SK-N-SH (cell line): ENCODE measurements at regions of chr7 and their contacts with region 1.

Region 1: GRCh38 chr7:139502226-139502625 is 18.8 kb upstream of the KLRG2 start:
- DNase-seq: no peak
- H3K4me3 ChIP-seq: no peak overlapping the region
- H3K27ac ChIP-seq: no peak overlapping the region
- H3K4me1 ChIP-seq: no peaks in the 10 kb centered on the region
- H3K27me3 ChIP-seq: no peaks in the 10 kb centered on the region
- CTCF ChIP-seq: no peak
- EP300 ChIP-seq: no peak
- RAD21 ChIP-seq: no peak

Region 2: DNA sequence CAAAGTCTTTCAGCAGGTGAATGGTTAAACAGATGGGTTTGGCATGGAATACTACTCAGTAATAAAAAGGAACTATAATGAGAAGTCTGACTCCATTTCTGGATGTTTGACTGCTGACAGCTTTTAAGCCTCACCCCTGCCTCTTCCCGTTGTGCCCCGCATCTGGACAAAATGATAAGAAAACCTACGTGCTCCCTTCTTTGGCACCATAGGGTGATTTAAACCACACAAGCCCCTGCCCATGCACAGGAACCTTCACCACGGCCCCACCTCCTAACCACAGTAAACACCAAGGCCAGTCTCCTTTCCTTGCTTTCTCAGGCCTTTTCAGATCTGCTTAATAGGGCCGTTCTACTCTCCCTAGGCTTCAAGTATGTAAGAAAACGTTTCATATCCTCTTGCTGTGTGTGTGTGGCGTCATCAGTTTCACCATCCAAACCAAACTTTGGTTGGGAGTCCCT is 318.3 kb before region 1 on chr7:
- CTCF ChIA-PET with region 1: no interaction called
- POLR2A ChIA-PET with region 1: no interaction called
- DNase-seq: no peak
- H3K4me3 ChIP-seq: no peak overlapping the region
- H3K27ac ChIP-seq: no peak overlapping the region
- H3K4me1 ChIP-seq: peaks cover 0 to 11% of the 10 kb centered on the region in 2 experiments; a peak in 1 of 4 replicates
- H3K27me3 ChIP-seq: no peaks in the 10 kb centered on the region
- CTCF ChIP-seq: no peak
- EP300 ChIP-seq: no peak
- RAD21 ChIP-seq: no peak

Region 3: DNA sequence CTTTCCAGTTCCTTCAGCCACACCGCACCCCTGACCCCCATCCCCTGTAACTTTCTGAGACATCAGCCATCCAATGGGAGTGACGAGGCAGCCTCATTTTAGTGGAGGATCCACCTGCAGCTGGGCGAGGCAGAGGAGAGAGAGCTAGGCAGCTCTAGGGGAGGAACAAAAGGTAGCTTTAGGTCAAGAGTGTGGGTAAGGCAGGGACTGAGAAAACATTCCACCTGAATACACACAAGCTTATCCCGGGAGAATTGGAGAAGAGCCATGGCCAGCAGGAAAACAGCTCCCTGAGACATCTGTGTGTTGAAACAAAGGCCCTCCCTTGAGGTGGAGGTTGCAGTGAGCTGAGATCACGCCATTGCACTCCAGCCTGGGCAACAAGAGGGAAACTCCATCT is 12.1 kb before region 1 on chr7:
- CTCF ChIA-PET with region 1: interaction called, 37 read pairs
- POLR2A ChIA-PET with region 1: no interaction called
- DNase-seq: no peak
- H3K4me3 ChIP-seq: no peak overlapping the region
- H3K27ac ChIP-seq: no peak overlapping the region
- H3K4me1 ChIP-seq: peaks cover under 1 to 4% of the 10 kb centered on the region in 2 experiments; a peak in 1 of 4 replicates
- H3K27me3 ChIP-seq: peaks cover 15% of the 10 kb centered on the region
- CTCF ChIP-seq: no peak
- EP300 ChIP-seq: no peak
- RAD21 ChIP-seq: no peak

Region 4: GRCh38 chr7:139570119-139570518 is 67.9 kb after region 1 on chr7:
- CTCF ChIA-PET with region 1: interaction called, 14 read pairs
- POLR2A ChIA-PET with region 1: no interaction called
- DNase-seq: peak; percentile 66
- H3K4me3 ChIP-seq: no peak overlapping the region
- H3K27ac ChIP-seq: no peak overlapping the region
- H3K4me1 ChIP-seq: no peaks in the 10 kb centered on the region
- H3K27me3 ChIP-seq: no peaks in the 10 kb centered on the region
- CTCF ChIP-seq: no peak
- EP300 ChIP-seq: no peak
- RAD21 ChIP-seq: peak; percentile 46

Region 5: DNA sequence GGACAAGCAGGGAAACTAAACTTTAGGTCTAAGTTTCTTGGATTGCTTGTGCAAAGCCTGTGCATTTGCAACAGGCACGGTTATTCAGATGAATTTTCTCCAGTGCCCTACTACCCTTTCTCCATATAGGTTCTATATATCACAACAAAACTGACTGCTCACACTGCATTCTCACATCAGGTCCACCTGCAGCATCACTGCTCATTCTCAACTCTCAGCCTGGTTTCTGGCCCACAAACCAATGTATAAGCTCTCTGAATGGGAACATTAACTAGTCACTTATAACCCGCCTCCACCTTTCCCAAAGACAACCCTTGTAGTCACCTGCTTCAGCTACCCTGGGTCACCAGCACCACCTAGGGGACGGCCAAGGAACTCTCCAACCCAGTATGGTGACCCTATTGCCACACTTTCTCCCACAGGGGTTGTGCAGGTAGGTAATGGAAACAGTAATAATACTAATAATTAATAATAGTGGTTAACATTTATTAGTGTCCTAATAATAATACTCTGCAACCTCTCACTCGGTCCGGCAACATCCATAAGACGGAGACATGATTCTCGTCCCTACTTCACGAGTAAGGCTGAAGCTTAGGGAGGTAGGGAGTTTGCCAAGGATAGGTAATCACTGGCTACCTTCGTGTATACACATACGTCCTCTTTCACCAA is 118.6 kb after region 1 on chr7:
- CTCF ChIA-PET with region 1: interaction called, 28 read pairs
- POLR2A ChIA-PET with region 1: no interaction called
- DNase-seq: peak; percentile 67
- H3K4me3 ChIP-seq: no peak overlapping the region
- H3K27ac ChIP-seq: no peak overlapping the region
- H3K4me1 ChIP-seq: no peaks in the 10 kb centered on the region
- H3K27me3 ChIP-seq: no peaks in the 10 kb centered on the region
- CTCF ChIP-seq: peak; percentile 76
- EP300 ChIP-seq: no peak
- RAD21 ChIP-seq: peak; percentile 79

Region 6: DNA sequence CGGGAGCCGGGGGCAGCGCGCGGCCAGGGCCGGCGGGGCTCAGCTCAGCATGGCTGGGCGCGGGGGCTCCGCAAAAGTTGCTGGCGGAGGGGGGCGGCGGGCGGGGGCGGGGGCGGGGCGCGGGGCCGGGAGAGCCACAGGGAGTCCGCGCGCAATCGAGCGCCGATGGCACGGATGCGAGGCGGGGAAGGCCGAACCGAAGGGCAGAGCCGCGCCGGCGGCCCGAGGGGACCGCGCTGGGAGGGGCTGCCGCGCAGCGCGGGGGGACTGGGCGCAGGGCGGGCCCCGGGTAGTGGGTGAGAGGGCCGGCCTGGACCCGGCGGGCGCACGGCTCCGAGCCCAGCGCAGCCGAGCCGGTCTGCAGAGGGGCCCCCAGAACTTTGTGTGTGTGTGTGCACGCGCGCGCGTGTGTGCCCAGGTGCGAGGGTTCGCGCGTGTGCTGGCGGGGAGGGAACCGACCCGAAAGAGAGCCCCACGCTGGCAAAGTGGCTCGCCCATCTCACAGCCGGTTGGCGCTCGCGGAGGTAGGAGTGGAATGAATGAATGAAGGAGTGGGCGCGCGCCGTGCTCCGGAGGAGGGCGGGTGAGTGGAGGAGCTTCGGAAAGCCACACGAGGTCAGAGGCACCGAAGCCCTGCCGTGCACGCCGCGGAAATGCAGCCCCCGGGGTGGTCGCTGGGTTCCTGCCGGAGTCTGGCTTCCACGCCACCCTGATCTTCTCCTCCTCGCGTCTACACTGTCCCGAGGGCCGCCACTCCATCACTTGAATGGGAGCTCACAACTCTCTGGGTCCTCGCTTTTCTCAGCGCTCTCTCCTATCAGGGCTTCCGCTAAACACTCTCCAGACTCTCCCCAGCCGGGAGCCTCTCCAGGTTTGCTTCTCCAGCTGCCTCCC is 276.0 kb after region 1 on chr7 and contains the start of gene HIPK2:
- CTCF ChIA-PET with region 1: interaction called, 13 read pairs
- POLR2A ChIA-PET with region 1: no interaction called
- DNase-seq: peak; percentile 99
- H3K4me3 ChIP-seq: peak within 1 kb of the TSS; percentile 84 to 98
- H3K27ac ChIP-seq: peak within 1 kb of the TSS; percentile 87 to 97
- H3K4me1 ChIP-seq: peaks cover 22 to 23% of the 10 kb centered on the region in 2 experiments
- H3K27me3 ChIP-seq: no peaks in the 10 kb centered on the region
- CTCF ChIP-seq: no peak
- EP300 ChIP-seq: peak in 1 of 2 experiments; percentile 30; a peak in 1 of 4 replicates
- RAD21 ChIP-seq: no peak
- polyA plus RNA-seq, gene HIPK2: 9.2 and 14.2 TPM in 2 replicates